CD4-positive, alpha-beta T cell (primary cell): ENCODE measurements at regions of chr6 and their contacts with region 1.

Region 1: GRCh38 chr6:52361945-52362442 is at the start of gene PAQR8:
- DNase-seq: peak; percentile 67 to 93 (median 78)
- ATAC-seq: peak; percentile 84
- H3K4me3 ChIP-seq: peak within 1 kb of the TSS; percentile 80
- H3K4me3 Mint-ChIP-seq: peak within 1 kb of the TSS; percentile 98
- H3K27ac ChIP-seq: peak within 1 kb of the TSS; percentile 81 to 88
- H3K27ac Mint-ChIP-seq: peak within 1 kb of the TSS; percentile 92
- H3K4me1 ChIP-seq: peaks cover 29% of the 10 kb centered on the region
- H3K4me1 Mint-ChIP-seq: peaks cover 53% of the 10 kb centered on the region
- H3K27me3 ChIP-seq: no peaks in the 10 kb centered on the region
- H3K27me3 Mint-ChIP-seq: no peaks in the 10 kb centered on the region
- CTCF ChIP-seq: no peak
- total RNA-seq, gene PAQR8: 1.8 to 1.9 TPM

Region 2: DNA sequence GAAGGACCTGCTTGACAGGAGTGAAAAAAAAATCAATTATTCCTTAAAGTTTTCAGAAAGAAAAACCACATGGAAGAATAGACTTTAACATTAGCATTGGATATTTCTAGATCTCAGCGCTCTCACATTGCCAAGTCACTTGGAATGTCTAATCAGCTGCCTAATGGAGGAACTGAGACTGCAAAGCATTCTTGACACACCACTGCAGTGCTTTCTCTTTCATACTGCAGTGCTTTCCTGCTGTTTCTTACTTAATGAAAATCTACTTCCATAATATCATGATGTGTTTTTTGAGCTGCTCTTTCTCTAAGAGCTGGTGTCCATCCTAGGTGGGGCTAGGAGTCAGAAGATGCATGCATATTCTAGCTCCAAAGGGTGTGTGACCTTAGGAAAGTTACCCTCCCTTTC is 57.0 kb before region 1 on chr6:
- CTCF ChIA-PET with region 1: interaction called, 5 read pairs
- POLR2A ChIA-PET with region 1: interaction called, 38 read pairs
- intact Hi-C with region 1: loop called (anchors 5 kb)
- DNase-seq: peak in 3 of 14 experiments; percentile 45 to 52 (median 46)
- ATAC-seq: peak; percentile 25
- H3K4me3 ChIP-seq: peak overlapping the region; percentile 10
- H3K4me3 Mint-ChIP-seq: peak overlapping the region; percentile 80
- H3K27ac ChIP-seq: peak overlapping the region; percentile 64 to 89
- H3K27ac Mint-ChIP-seq: peak overlapping the region; percentile 92
- H3K4me1 ChIP-seq: peaks cover 71% of the 10 kb centered on the region
- H3K4me1 Mint-ChIP-seq: peaks cover 80% of the 10 kb centered on the region
- H3K27me3 ChIP-seq: no peaks in the 10 kb centered on the region
- H3K27me3 Mint-ChIP-seq: no peaks in the 10 kb centered on the region
- CTCF ChIP-seq: no peak

Region 3: DNA sequence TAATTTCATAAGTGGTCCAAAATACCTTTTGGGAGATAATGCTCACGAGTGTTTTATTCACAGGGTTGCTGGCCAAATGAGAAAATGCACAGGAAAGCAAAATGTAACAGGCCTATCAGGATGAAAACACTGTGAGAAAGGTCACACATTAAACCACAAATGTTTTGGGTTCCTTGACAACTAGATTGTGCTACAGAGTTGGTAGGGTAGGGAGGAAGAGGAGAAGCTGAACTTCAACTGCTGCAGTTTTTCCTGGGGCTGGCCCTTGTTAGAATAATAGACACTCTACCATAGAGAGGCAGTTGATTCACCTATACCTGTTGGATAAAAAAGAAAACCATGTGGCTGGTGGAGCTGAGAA is 28.2 kb before region 1 on chr6:
- CTCF ChIA-PET with region 1: no interaction called
- POLR2A ChIA-PET with region 1: interaction called, 13 read pairs
- intact Hi-C with region 1: no loop called
- DNase-seq: peak in 5 of 14 experiments; percentile 1 to 87 (median 50)
- ATAC-seq: peak; percentile 85
- H3K4me3 ChIP-seq: peak overlapping the region; percentile 10
- H3K4me3 Mint-ChIP-seq: peak overlapping the region; percentile 70
- H3K27ac ChIP-seq: peak overlapping the region; percentile 65 to 79
- H3K27ac Mint-ChIP-seq: peak overlapping the region; percentile 87
- H3K4me1 ChIP-seq: peaks cover 48% of the 10 kb centered on the region
- H3K4me1 Mint-ChIP-seq: peaks cover 79% of the 10 kb centered on the region
- H3K27me3 ChIP-seq: no peaks in the 10 kb centered on the region
- H3K27me3 Mint-ChIP-seq: no peaks in the 10 kb centered on the region
- CTCF ChIP-seq: no peak

Region 4: GRCh38 chr6:52341561-52342260 is 20.3 kb before region 1 on chr6:
- CTCF ChIA-PET with region 1: no interaction called
- POLR2A ChIA-PET with region 1: interaction called, 4 read pairs
- intact Hi-C with region 1: loop called in 1 of 2 experiments (anchors 2 kb)
- DNase-seq: peak in 1 of 14 experiments; percentile 44
- ATAC-seq: no peak
- H3K4me3 ChIP-seq: no peak overlapping the region
- H3K4me3 Mint-ChIP-seq: peak overlapping the region; percentile 40
- H3K27ac ChIP-seq: no peak overlapping the region
- H3K27ac Mint-ChIP-seq: peak overlapping the region; percentile 34
- H3K4me1 ChIP-seq: peaks cover 6% of the 10 kb centered on the region
- H3K4me1 Mint-ChIP-seq: peaks cover 37% of the 10 kb centered on the region
- H3K27me3 ChIP-seq: no peaks in the 10 kb centered on the region
- H3K27me3 Mint-ChIP-seq: no peaks in the 10 kb centered on the region
- CTCF ChIP-seq: no peak

Region 5: DNA sequence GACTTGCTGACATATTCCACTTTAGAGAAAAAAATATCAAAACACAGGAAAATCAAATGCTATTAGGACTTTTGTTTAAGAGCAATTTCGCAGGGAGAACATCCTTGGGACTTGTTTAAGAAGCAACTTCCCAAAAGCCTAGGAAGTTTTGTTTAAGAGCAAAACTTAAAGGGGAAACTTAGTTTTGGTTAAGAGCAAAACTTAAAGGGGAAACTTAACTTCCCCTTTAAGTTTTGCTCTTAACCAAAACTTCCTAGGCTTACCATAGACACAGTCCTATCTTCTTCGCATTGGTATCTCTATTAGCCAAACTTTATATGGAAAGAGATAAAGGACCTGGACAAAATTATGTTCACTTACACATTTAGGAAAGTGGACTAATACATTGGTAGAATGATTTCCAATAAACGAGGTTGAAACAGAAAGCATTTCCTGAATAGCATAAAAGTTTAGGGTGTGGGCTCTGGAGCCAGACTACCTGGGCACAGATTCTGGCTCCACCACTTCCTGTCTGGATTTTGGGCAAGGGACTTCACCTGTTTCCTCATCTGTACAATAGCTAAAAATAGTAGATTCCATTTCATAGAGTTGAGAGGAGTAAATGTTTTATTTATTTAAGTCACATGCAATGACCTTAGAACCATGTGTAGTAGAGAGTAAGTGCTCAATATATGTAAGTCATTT is 15.7 kb after region 1 on chr6:
- CTCF ChIA-PET with region 1: interaction called, 6 read pairs
- POLR2A ChIA-PET with region 1: interaction called, 23 read pairs
- intact Hi-C with region 1: loop called (anchors 2 kb)
- DNase-seq: peak in 5 of 14 experiments; percentile 12 to 47 (median 33)
- ATAC-seq: peak; percentile 72
- H3K4me3 ChIP-seq: no peak overlapping the region
- H3K4me3 Mint-ChIP-seq: peak overlapping the region; percentile 70
- H3K27ac ChIP-seq: no peak overlapping the region
- H3K27ac Mint-ChIP-seq: peak overlapping the region; percentile 80
- H3K4me1 ChIP-seq: peaks cover 41% of the 10 kb centered on the region
- H3K4me1 Mint-ChIP-seq: peaks cover 82% of the 10 kb centered on the region
- H3K27me3 ChIP-seq: no peaks in the 10 kb centered on the region
- H3K27me3 Mint-ChIP-seq: no peaks in the 10 kb centered on the region
- CTCF ChIP-seq: no peak

Region 6: DNA sequence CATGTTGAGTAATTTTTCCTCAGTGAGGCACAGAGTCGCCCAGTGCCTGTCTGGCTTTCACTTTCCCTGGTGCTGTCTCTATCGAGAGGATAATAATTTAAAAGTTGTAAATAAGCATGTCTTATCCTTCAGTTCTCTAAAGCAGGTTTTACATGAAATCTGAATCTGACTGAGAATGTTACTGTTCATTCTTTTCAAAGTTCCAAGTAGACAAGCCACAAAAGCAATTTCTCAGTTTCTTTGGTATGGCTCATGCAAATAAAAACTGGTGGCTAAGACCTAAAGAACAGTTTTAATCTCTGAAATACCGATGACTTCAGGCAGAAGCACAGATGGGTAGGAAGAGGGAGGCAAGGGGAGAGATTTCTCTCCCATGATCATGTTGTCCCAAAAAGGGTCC is 874.2 kb after region 1 on chr6:
- CTCF ChIA-PET with region 1: no interaction called
- POLR2A ChIA-PET with region 1: no interaction called
- intact Hi-C with region 1: no loop called
- DNase-seq: no peak
- ATAC-seq: peak; percentile 29
- H3K4me3 ChIP-seq: peak overlapping the region; percentile 26
- H3K4me3 Mint-ChIP-seq: peak overlapping the region; percentile 46
- H3K27ac ChIP-seq: no peak overlapping the region
- H3K27ac Mint-ChIP-seq: no peak overlapping the region
- H3K4me1 ChIP-seq: peaks cover 19% of the 10 kb centered on the region
- H3K4me1 Mint-ChIP-seq: peaks cover 47% of the 10 kb centered on the region
- H3K27me3 ChIP-seq: no peaks in the 10 kb centered on the region
- H3K27me3 Mint-ChIP-seq: no peaks in the 10 kb centered on the region
- CTCF ChIP-seq: no peak